ENCODE measurements at regions of chr17 and their contacts with region 1.

Region 1: DNA sequence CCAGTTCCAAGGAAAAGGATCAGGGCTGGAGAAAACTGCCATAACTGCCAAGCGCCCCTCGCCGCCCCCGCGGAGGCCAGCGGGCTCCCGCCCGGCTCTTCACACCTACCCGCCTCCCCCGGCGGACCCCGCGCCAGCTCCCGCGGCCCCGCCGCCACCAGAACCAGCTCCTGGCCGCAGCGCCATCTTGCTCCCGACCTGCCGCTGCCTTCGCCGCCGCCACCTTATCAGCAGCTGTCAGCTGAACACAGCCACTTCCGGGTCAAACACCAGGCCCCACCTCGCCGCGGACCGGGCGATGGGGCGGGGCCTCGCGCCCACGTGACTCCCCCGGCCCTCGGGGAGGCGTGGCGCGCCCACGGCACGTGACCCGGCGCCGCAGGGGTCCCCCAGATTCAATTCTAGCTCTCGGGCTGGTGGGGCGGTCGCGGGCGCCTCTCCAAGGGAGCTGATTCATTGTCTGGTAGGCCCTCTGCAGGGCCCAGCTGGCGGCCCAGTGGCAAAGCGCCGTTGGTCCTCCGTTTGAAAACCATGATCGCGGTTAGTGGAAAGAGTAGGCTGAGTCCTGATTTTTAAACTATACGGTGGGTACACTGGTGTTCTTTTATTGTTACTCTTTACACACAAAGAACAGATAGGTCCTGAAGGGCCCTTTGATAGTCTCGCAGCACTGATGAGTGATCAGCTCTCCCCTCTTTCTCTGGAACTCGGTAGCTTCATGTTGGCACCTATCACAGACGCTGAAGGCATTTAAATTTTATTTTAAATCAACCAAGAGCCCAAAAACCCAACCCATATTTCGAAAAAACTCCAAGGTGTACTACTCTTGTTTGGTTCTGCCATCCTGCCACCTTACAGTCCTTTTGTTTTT is at the start of gene SYNRG:
- DNase-seq: peak; percentile 96
- ATAC-seq: peak; percentile 85
- H3K4me3 Mint-ChIP-seq: peak within 1 kb of the TSS; percentile 81
- H3K27ac Mint-ChIP-seq: peak within 1 kb of the TSS; percentile 94
- H3K4me1 Mint-ChIP-seq: peaks cover 38% of the 10 kb centered on the region
- H3K27me3 Mint-ChIP-seq: no peaks in the 10 kb centered on the region
- total RNA-seq, gene SYNRG: 97.4 to 105 TPM

Region 2: GRCh38 chr17:37392024-37392590 is 217.3 kb before region 1 on chr17:
- CTCF ChIA-PET with region 1: no interaction called
- POLR2A ChIA-PET with region 1: no interaction called
- DNase-seq: no peak
- ATAC-seq: no peak
- H3K4me3 Mint-ChIP-seq: peak overlapping the region; percentile 17
- H3K27ac Mint-ChIP-seq: no peak overlapping the region
- H3K4me1 Mint-ChIP-seq: peaks cover 18% of the 10 kb centered on the region
- H3K27me3 Mint-ChIP-seq: no peaks in the 10 kb centered on the region

Region 3: GRCh38 chr17:37527249-37527851 is 82.1 kb before region 1 on chr17:
- CTCF ChIA-PET with region 1: interaction called, 22 read pairs
- POLR2A ChIA-PET with region 1: interaction called, 5 read pairs
- DNase-seq: peak; percentile 53
- ATAC-seq: peak; percentile 70
- H3K4me3 Mint-ChIP-seq: no peak overlapping the region
- H3K27ac Mint-ChIP-seq: no peak overlapping the region
- H3K4me1 Mint-ChIP-seq: peaks cover 12% of the 10 kb centered on the region
- H3K27me3 Mint-ChIP-seq: no peaks in the 10 kb centered on the region

Region 4: DNA sequence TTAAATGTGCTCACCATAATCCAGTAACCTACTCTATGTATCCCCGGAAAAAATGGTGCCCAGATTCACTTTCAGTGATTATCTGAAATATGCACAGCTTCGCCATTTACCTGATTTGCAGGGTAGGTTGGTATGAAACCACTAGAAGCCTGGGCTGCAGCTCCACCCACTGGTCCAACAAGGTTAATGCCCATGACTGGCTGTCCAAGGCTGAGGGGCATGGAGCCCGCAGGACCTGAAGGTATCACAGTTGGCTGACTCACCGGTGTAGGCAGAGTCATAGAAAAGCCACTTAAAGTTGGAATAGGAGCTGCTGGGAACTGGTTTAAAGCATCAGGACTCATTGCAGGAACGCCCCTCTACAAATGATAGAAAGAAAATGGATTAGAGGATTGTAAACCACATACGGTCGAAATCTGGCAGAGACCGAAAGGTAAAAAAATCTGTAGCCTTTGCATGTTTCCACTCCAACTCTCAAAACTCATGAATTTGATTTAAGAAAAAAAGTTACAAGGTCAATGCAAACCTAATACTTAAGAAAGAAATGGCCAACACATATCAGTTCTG is 38.8 kb before region 1 on chr17:
- CTCF ChIA-PET with region 1: interaction called, 14 read pairs
- POLR2A ChIA-PET with region 1: interaction called, 3 read pairs
- DNase-seq: peak; percentile 36
- ATAC-seq: no peak
- H3K4me3 Mint-ChIP-seq: no peak overlapping the region
- H3K27ac Mint-ChIP-seq: no peak overlapping the region
- H3K4me1 Mint-ChIP-seq: no peaks in the 10 kb centered on the region
- H3K27me3 Mint-ChIP-seq: no peaks in the 10 kb centered on the region

Region 5: GRCh38 chr17:37598145-37598544 is 11.3 kb before region 1 on chr17:
- CTCF ChIA-PET with region 1: interaction called, 16 read pairs
- POLR2A ChIA-PET with region 1: interaction called, 4 read pairs
- DNase-seq: no peak
- ATAC-seq: no peak
- H3K4me3 Mint-ChIP-seq: no peak overlapping the region
- H3K27ac Mint-ChIP-seq: no peak overlapping the region
- H3K4me1 Mint-ChIP-seq: peaks cover 29% of the 10 kb centered on the region
- H3K27me3 Mint-ChIP-seq: no peaks in the 10 kb centered on the region

Region 6: DNA sequence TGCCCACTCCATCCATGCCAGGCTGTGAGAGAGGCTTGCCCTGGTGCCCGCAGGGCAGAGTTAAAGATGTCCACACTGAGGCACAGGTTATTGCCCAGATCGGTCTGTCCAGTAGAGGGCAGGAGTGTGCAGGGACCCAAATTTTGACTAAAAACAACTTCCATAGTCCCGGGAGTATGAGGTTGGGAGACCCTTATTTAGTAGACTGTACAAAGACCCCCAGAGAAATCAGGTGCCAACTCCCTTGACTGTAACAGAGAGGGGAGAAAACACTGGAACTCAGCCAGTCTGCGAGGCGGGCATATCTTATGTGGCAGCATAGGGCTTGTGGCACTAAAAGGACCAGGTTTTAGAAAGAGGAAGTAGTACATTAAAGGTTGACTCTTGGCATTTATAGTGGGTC is 92.1 kb after region 1 on chr17:
- CTCF ChIA-PET with region 1: interaction called, 11 read pairs
- POLR2A ChIA-PET with region 1: no interaction called
- DNase-seq: peak; percentile 65
- ATAC-seq: peak; percentile 71
- H3K4me3 Mint-ChIP-seq: no peak overlapping the region
- H3K27ac Mint-ChIP-seq: no peak overlapping the region
- H3K4me1 Mint-ChIP-seq: peaks cover 8% of the 10 kb centered on the region
- H3K27me3 Mint-ChIP-seq: peaks cover 28% of the 10 kb centered on the region

Region 7: GRCh38 chr17:37816950-37817349 is 207.5 kb after region 1 on chr17:
- CTCF ChIA-PET with region 1: interaction called, 12 read pairs
- POLR2A ChIA-PET with region 1: no interaction called
- DNase-seq: no peak
- ATAC-seq: no peak
- H3K4me3 Mint-ChIP-seq: no peak overlapping the region
- H3K27ac Mint-ChIP-seq: no peak overlapping the region
- H3K4me1 Mint-ChIP-seq: peaks cover 24% of the 10 kb centered on the region
- H3K27me3 Mint-ChIP-seq: peaks cover 21% of the 10 kb centered on the region

Measured in activated CD8-positive, alpha-beta T cell treated with anti-CD3 and anti-CD28 coated beads, Interleukin-2, amount 10 ng/mL, durations not matched to agents 7 days and 5 days (primary cell).